BJ (cell line): ENCODE measurements at regions of chr10 and their contacts with region 1.

Region 1: DNA sequence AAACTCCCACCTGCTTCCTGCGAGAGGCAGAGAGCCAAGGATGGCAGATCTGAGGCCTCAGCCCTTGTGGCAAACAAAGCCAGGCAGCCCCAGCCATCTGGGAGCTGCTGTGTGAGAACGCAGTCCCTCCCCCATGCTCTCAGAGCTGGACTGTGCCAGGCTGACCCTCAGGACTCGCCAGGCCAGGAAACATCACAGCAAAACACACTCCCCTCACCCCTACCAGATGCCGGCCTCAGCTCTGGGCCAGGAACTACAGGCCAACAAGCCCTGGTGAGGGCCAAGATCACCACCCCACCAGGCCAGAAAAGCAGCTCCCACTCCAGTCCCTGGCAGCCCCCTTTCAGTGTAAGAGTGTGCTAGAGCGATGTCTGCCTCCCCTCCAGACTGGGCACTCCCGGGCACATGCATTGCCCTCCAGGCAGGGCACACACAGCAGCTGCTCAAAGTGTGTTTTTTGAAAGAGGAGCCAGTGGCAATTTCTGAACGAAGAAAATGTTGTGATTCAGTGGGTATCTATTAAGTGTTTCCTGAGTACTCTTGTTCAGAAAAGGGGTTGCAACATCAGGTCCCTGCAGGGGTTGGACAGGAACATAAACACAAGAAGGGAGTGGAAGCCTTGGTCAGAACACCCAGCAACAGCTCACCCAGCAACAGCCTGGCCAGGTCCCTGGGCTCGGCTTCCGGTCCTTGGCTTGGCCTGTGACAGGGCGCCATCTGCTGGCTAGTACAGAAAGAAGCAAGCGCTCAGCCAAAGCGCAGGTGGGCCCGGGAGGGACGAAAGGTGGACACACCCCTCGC is 18.3 kb downstream of the LRRC20 start:
- DNase-seq: peak; percentile 81
- H3K4me3 ChIP-seq: peak overlapping the region; percentile 9; the same call in 1 of the 2 replicates
- H3K27me3 ChIP-seq: no peaks in the 10 kb centered on the region
- CTCF ChIP-seq: peak; percentile 95

Region 2: DNA sequence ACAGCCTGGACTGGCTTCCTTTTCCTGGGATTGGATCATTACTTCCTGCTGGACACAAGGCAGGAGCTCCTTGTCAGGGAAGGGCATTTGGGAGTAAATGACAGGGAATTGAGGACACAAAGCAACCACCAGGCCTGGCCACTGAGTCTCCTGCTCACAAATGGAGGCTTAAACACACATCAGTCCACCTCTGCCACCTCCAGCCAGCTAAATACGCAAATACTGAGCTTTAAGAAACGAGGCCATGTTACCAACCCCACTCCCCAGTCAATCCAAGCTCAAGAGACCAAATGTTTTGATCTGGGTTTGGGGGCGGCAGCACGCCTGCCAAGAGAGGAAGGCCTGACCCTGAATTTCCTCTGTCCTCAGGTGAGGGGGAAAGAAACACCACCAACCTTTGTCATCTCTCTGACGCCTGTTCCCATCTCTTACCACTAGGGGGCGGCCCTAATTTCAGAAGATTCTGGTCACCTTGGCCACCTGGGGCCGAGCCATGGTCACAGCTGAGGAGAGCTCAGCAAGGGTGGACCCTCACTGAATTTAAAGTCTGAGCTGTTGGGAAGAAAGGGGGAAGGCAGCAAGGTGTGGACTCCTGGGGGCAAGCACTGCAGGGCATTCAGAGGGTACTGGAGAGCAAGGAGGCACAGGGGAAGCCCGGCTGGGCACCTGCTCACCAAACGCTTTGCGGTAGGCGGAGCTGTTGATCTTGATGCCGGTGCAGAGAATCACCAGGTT is 248.1 kb before region 1 on chr10:
- CTCF ChIA-PET with region 1: interaction called, 13 read pairs
- POLR2A ChIA-PET with region 1: no interaction called
- DNase-seq: no peak
- H3K4me3 ChIP-seq: no peak overlapping the region
- H3K27me3 ChIP-seq: no peaks in the 10 kb centered on the region
- CTCF ChIP-seq: peak; percentile 91

Region 3: GRCh38 chr10:70198696-70199466 is 165.3 kb before region 1 on chr10:
- CTCF ChIA-PET with region 1: interaction called, 10 read pairs
- POLR2A ChIA-PET with region 1: no interaction called
- DNase-seq: no peak
- H3K4me3 ChIP-seq: no peak overlapping the region
- H3K27me3 ChIP-seq: no peaks in the 10 kb centered on the region
- CTCF ChIP-seq: no peak

Region 4: GRCh38 chr10:70233109-70233938 is 130.8 kb before region 1 on chr10 and contains the start of gene PPA1:
- CTCF ChIA-PET with region 1: interaction called, 219 read pairs
- POLR2A ChIA-PET with region 1: interaction called, 3 read pairs
- DNase-seq: peak; percentile 69
- H3K4me3 ChIP-seq: peak within 1 kb of the TSS; percentile 83
- H3K27me3 ChIP-seq: no peaks in the 10 kb centered on the region
- CTCF ChIP-seq: no peak; the same call in 1 of the 2 replicates
- polyA plus RNA-seq, gene PPA1: 49.8 and 110 TPM in 2 replicates

Region 5: GRCh38 chr10:70302292-70302691 is 61.9 kb before region 1 on chr10:
- CTCF ChIA-PET with region 1: interaction called, 4 read pairs
- POLR2A ChIA-PET with region 1: interaction called, 21 read pairs
- DNase-seq: peak; percentile 9
- H3K4me3 ChIP-seq: no peak overlapping the region
- H3K27me3 ChIP-seq: no peaks in the 10 kb centered on the region
- CTCF ChIP-seq: no peak

Region 6: GRCh38 chr10:70376436-70377378 is 12.5 kb after region 1 on chr10:
- CTCF ChIA-PET with region 1: interaction called, 33 read pairs
- POLR2A ChIA-PET with region 1: no interaction called
- DNase-seq: no peak
- H3K4me3 ChIP-seq: no peak overlapping the region
- H3K27me3 ChIP-seq: peaks cover 1% of the 10 kb centered on the region; the same call in 1 of the 2 replicates
- CTCF ChIP-seq: no peak